CD8-positive, alpha-beta memory T cell (primary cell): ENCODE measurements at regions of chr5 and their contacts with region 1.

Region 1: DNA sequence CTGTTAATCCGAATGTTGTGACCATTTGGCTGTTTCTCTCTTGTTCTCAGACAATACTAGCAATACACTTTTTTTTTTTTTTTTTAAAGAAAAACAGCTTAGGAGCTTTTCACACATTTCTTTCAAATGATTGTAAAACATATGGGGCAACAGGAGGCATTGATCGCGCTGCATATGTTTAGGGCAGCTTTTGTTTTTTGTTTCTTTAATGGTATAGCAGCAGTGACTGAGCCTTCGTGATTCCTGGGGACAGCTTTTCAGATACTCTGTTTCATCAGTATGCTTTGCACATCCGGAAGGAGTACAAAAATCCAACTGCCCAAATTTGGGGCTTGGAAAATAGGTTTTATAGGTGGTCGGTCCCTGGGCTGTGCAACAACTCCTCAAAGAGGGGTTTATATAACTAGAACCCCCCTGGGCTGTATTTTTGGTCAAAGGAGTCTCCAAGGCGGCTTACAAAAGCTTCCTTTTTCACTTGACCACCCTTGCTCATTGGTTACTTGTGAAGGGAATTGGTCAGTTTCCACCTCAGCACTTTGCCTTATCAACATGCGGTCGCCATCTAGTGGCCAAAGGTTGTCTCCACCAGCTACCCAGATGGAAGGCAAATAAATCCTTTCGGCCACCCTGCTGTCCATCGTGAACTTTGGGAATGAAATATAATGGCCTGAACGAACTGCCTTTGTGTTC is 91.8 kb downstream of the PDE6A start:
- DNase-seq: peak in 2 of 5 donors; percentile 6 to 9
- H3K4me3 ChIP-seq: no peak overlapping the region
- H3K4me3 Mint-ChIP-seq: no peak overlapping the region
- H3K27ac ChIP-seq: no peak overlapping the region
- H3K27ac Mint-ChIP-seq: peak overlapping the region in 2 of 8 donors; percentile 29 to 52
- H3K4me1 ChIP-seq: no peaks in the 10 kb centered on the region
- H3K4me1 Mint-ChIP-seq: peaks cover 0 to 2% (median 0%) of the 10 kb centered on the region in 3 donors
- H3K27me3 ChIP-seq: no peaks in the 10 kb centered on the region
- H3K27me3 Mint-ChIP-seq: peaks cover 0 to 2% of the 10 kb centered on the region in 2 donors

Region 2: DNA sequence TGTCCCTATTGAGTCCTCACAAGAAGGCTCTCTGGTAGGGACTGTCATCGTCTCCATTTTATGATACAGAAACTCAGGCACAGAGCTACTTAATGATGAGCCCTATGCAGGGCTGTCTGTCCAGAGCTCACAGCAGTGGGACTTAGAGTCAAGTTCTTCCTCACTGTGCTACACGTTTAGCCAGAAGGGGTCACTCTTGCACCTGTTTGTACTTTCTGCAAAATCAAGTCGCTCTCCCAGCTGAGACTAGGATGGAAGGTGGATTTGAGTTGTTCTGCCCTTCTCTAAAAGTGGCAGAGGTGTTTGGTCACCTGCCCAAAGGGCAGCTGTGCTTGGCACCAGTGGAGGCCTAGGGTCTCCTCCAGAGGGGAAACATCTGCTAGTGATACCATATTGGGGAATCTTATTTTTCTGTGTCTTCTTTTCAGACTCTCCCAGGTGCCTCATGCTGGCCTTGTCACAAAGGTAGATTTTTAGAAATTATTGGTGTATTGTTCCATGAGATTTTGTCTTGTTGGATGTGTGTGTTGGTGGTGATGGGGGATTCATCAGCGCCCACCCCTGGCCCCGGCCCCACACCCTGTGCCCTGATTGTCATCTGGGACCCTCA is 18.4 kb before region 1 on chr5:
- CTCF ChIA-PET with region 1: interaction called, 12 read pairs
- POLR2A ChIA-PET with region 1: no interaction called
- DNase-seq: peak in 4 of 5 donors; percentile 28 to 56 (median 38)
- H3K4me3 ChIP-seq: no peak overlapping the region
- H3K4me3 Mint-ChIP-seq: no peak overlapping the region
- H3K27ac ChIP-seq: no peak overlapping the region
- H3K27ac Mint-ChIP-seq: peak overlapping the region in 1 of 8 donors; percentile 58
- H3K4me1 ChIP-seq: no peaks in the 10 kb centered on the region
- H3K4me1 Mint-ChIP-seq: peaks cover 0 to 1% (median 0%) of the 10 kb centered on the region in 3 donors
- H3K27me3 ChIP-seq: no peaks in the 10 kb centered on the region
- H3K27me3 Mint-ChIP-seq: no peaks in the 10 kb centered on the region

Region 3: GRCh38 chr5:149990518-149991376 is 138.0 kb after region 1 on chr5:
- CTCF ChIA-PET with region 1: interaction called, 14 read pairs
- POLR2A ChIA-PET with region 1: no interaction called
- DNase-seq: peak; percentile 46 to 76 (median 49)
- H3K4me3 ChIP-seq: no peak overlapping the region
- H3K4me3 Mint-ChIP-seq: no peak overlapping the region
- H3K27ac ChIP-seq: no peak overlapping the region
- H3K27ac Mint-ChIP-seq: no peak overlapping the region
- H3K4me1 ChIP-seq: no peaks in the 10 kb centered on the region
- H3K4me1 Mint-ChIP-seq: no peaks in the 10 kb centered on the region
- H3K27me3 ChIP-seq: no peaks in the 10 kb centered on the region
- H3K27me3 Mint-ChIP-seq: no peaks in the 10 kb centered on the region

Region 4: DNA sequence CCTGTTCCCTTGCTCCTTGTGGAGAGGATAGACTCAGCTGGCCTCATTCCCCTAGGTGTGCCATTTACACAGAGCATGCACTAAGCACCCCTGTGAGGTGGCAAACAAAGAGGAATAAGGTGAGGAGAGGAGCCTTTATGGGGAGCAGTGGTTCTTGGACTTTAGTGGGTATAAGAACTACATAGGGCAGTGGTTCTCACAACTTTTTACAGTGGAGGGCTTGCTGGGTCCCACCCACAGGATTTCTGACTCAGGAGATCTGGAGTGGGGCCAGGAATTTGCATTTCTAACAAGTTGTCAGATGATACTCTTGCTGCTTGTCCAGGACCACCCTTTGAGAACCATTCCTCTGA is 191.5 kb after region 1 on chr5:
- CTCF ChIA-PET with region 1: no interaction called
- POLR2A ChIA-PET with region 1: no interaction called
- DNase-seq: no peak
- H3K4me3 ChIP-seq: no peak overlapping the region
- H3K4me3 Mint-ChIP-seq: no peak overlapping the region
- H3K27ac ChIP-seq: no peak overlapping the region
- H3K27ac Mint-ChIP-seq: no peak overlapping the region
- H3K4me1 ChIP-seq: peaks cover 21% of the 10 kb centered on the region
- H3K4me1 Mint-ChIP-seq: peaks cover 37 to 39% (median 39%) of the 10 kb centered on the region in 3 donors
- H3K27me3 ChIP-seq: no peaks in the 10 kb centered on the region
- H3K27me3 Mint-ChIP-seq: peaks cover 0 to 6% of the 10 kb centered on the region in 2 donors